Aorta (tissue), 5 donors: ENCODE measurements at regions of chr3 and their contacts with region 1.

Region 1: GRCh38 chr3:128650096-128651050 is at the start of gene RPN1:
- DNase-seq: peak; percentile 98 to 99
- ATAC-seq: peak; percentile 100
- H3K4me3 ChIP-seq: peak within 1 kb of the TSS; percentile 68 to 93
- H3K27ac ChIP-seq: peak within 1 kb of the TSS; percentile 30 to 68
- H3K4me1 ChIP-seq: peaks cover 0 to 2% of the 10 kb centered on the region in 2 donors
- H3K27me3 ChIP-seq: no peaks in the 10 kb centered on the region
- total RNA-seq, gene RPN1: 118 to 133 TPM

Region 2: DNA sequence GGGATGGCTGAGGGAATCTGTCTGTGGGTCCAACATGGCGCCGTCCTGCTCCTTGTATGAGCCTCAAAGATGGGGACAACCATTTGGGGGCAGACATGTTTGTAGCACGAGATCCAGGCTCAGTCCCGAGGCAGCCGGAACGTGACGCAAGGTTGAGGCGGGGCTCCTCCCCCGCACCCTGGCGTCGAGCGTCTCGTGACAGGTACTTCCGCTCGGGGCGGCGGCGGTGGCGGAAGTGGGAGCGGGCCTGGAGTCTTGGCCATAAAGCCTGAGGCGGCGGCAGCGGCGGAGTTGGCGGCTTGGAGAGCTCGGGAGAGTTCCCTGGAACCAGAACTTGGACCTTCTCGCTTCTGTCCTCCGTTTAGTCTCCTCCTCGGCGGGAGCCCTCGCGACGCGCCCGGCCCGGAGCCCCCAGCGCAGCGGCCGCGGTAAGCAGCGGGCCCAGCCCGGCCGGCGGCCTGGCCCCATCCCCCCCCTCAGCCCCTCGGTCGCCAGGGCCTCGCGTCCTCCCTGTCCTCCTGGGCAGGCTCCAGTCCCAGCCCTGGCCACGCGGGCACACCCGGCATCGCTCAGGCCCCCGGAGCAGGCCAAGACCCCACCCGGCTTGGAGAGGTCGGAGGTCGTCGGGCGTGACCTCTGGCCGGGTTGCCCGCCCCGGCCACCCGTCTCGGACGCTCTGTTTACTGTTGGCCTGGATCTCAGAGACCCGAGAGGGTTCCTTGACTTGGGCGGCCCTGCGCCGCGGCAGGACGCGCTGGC is 75.7 kb after region 1 on chr3 and contains the start of gene RAB7A:
- intact Hi-C with region 1: loop called in 1 of 2 experiments (anchors 2 kb)
- DNase-seq: peak; percentile 99
- ATAC-seq: peak; percentile 99
- H3K4me3 ChIP-seq: peak within 1 kb of the TSS; percentile 88
- H3K27ac ChIP-seq: peak within 1 kb of the TSS; percentile 7 to 92
- H3K4me1 ChIP-seq: peaks cover 5 to 10% of the 10 kb centered on the region in 2 donors
- H3K27me3 ChIP-seq: no peaks in the 10 kb centered on the region
- total RNA-seq, gene RAB7A: 202 to 211 TPM